Astrocyte of the cerebellum (primary cell): ENCODE measurements at regions of chr15 and their contacts with region 1.

Region 1: GRCh38 chr15:39799552-39800011 is 16.9 kb upstream of the FSIP1 start:
- DNase-seq: no peak
- H3K4me3 ChIP-seq: no peak overlapping the region
- CTCF ChIP-seq: no peak

Region 2: GRCh38 chr15:39846108-39846507 is 46.5 kb after region 1 on chr15:
- in situ Hi-C with region 1: loop called (anchors 5 kb)
- DNase-seq: no peak
- H3K4me3 ChIP-seq: no peak overlapping the region
- CTCF ChIP-seq: no peak

Region 3: DNA sequence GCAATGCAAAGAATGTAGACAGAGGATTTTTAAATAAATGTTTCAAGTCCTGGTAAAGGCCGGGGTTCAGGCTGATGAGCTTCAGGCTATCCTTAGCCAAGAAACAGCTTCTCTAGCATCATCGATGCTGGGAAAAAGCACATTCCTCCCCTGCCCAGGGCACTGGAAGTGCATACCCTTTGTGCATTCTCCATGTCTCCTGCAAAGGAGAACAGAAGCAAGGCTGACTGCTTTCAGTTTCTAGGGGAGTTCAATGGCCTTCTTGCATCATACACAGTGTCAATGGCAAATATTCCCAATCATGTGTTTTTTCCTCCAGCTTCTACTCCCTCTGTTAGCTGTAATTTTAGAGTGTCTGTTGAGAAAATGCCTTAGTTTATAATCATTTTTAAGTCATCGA is 60.6 kb after region 1 on chr15:
- in situ Hi-C with region 1: no loop called
- DNase-seq: no peak
- H3K4me3 ChIP-seq: no peak overlapping the region
- CTCF ChIP-seq: no peak

Region 4: DNA sequence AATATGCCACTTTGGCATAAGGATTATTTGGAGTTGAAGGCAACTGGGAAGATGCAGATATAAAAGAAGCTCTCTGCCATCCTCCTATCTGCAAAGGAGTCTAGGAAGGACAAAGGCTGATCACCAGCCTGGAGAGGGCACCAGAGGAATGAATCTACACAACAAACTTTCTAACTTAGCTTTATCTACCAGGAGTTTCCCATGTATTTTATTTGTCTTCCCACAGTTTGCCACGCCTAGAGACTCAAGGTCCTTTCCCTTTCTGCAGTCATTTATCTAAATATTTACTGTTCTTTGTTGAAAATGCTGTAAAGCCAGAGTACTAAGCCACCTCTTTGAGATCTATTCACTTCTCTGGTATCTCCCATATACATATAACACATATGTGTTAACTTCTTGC is 88.2 kb after region 1 on chr15:
- in situ Hi-C with region 1: loop called (anchors 5 kb)
- DNase-seq: peak; percentile 16
- H3K4me3 ChIP-seq: no peak overlapping the region
- CTCF ChIP-seq: peak; percentile 41